Left cardiac atrium (tissue), 4 donors: ENCODE measurements at regions of chr7 and their contacts with region 1.

Region 1: GRCh38 chr7:87231256-87231655 is 11.7 kb upstream of the TMEM243 start:
- DNase-seq: peak; percentile 29
- ATAC-seq: peak; percentile 86 to 91

Region 2: DNA sequence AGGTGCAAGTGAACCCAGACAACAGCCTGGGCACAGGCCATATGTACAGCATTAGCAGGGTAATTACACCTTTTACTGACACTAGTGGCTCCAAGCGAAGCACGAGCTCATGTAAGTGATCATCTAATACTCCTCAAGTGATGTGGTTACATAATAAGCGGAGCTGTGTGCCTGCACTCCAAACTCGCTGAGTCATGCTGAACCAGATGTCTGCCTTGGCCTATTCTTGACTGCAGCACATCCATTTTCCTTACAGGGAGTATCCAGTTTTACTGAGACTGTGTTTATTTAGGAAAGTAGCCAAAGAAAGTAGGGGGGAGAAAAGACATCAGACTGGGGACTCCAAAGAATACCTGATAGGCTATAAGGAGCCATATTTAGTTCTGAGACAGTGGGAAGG is 497.5 kb before region 1 on chr7:
- intact Hi-C with region 1: no loop called
- DNase-seq: no peak
- ATAC-seq: no peak

Region 3: GRCh38 chr7:86926732-86927131 is 304.5 kb before region 1 on chr7:
- intact Hi-C with region 1: loop called (anchors 5 to 10 kb)
- DNase-seq: no peak
- ATAC-seq: peak in 1 of 2 donors; percentile 54

Region 4: DNA sequence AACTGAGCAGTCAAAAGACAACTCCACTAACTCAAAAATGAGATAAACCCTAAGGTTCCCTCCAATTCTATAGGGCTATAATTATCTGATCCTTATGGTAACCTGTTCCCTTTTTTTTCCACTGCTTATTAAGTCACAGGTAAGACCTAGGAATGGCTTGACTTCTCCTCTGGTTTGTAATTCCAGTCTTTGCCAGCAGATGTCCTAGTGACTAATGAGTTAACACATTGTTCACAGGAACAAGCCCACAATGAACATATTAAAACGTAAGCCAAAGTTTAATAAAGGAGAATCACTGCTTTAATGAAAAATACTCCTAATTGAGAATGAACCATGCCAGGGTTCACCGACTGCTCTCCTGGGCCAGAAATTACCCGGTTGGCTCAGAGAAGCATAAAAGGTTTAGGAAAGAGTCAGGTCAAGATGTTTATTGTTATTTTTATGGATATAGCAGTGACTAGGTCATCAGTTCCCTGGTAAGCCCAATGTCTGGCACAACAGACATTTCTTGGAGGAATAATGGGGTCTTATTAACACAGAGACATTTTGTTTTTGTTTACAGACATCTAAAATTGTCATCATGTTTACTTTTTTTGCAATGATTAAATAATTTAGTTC is 291.9 kb before region 1 on chr7:
- intact Hi-C with region 1: loop called in 1 of 2 experiments (anchors 10 kb)
- DNase-seq: no peak
- ATAC-seq: peak; percentile 67 to 72

Region 5: DNA sequence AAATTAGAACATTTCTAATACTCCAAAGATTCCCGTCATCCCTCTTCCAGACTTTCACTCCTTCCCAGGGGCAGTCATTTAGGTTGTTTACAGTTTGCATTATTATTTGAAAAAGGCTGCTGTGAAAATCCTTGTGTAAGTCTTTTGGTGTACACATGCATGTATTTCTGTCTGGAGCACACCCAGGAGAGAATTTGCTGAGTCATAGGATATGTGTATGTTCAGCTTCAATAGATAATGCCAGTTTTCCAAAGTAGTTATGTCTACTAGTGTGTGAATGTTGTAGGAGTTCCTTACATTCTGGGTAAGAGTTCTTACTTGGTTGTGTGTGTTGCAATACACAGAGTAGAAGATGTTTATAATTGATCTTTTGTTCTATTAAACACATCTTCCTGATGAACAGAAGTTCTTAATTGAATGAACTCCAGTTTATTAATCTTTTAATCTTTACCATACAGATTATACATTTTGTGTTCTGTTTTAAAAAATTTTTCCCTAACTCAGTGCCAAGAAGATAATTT is 139.5 kb after region 1 on chr7:
- intact Hi-C with region 1: no loop called
- DNase-seq: no peak
- ATAC-seq: no peak